Calu3 (cell line): ENCODE measurements at regions of chr4 and their contacts with region 1.

Region 1: DNA sequence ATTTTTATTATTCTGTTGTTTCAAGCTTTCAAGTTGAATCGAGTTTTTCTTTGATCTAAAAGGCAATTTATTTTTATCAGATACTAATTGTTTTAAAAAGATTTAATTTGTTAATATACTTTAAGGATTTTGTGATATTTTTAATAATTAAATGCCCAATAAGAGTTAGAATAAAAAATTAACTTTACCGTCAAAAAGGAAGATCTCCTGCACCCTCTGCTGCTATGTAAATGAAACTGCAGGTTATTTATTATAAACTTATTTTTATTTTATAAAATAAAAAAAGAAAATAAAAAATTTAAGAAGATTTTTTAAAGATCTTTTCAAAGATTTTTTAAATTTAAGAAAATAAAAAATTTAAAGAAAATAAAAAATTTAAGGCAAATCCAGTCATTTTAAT is 166.1 kb downstream of the CCSER1 start:
- DNase-seq: no peak
- H3K4me3 Mint-ChIP-seq: no peak overlapping the region
- H3K27ac Mint-ChIP-seq: no peak overlapping the region
- H3K4me1 Mint-ChIP-seq: no peaks in the 10 kb centered on the region
- H3K27me3 Mint-ChIP-seq: no peaks in the 10 kb centered on the region
- CTCF ChIP-seq: no peak

Region 2: GRCh38 chr4:89949782-89950387 is 343.4 kb before region 1 on chr4:
- CTCF ChIA-PET with region 1: no interaction called
- intact Hi-C with region 1: loop called (anchors 2 kb)
- DNase-seq: no peak
- H3K4me3 Mint-ChIP-seq: no peak overlapping the region
- H3K27ac Mint-ChIP-seq: no peak overlapping the region
- H3K4me1 Mint-ChIP-seq: no peaks in the 10 kb centered on the region
- H3K27me3 Mint-ChIP-seq: no peaks in the 10 kb centered on the region
- CTCF ChIP-seq: no peak

Region 3: GRCh38 chr4:90025248-90025647 is 268.1 kb before region 1 on chr4:
- CTCF ChIA-PET with region 1: no interaction called
- intact Hi-C with region 1: loop called (anchors 1 kb)
- DNase-seq: no peak
- H3K4me3 Mint-ChIP-seq: no peak overlapping the region
- H3K27ac Mint-ChIP-seq: no peak overlapping the region
- H3K4me1 Mint-ChIP-seq: no peaks in the 10 kb centered on the region
- H3K27me3 Mint-ChIP-seq: no peaks in the 10 kb centered on the region
- CTCF ChIP-seq: no peak

Region 4: GRCh38 chr4:90120037-90120436 is 173.3 kb before region 1 on chr4:
- CTCF ChIA-PET with region 1: no interaction called
- intact Hi-C with region 1: loop called (anchors 2 kb)
- DNase-seq: no peak
- H3K4me3 Mint-ChIP-seq: no peak overlapping the region
- H3K27ac Mint-ChIP-seq: no peak overlapping the region
- H3K4me1 Mint-ChIP-seq: no peaks in the 10 kb centered on the region
- H3K27me3 Mint-ChIP-seq: no peaks in the 10 kb centered on the region
- CTCF ChIP-seq: no peak

Region 5: DNA sequence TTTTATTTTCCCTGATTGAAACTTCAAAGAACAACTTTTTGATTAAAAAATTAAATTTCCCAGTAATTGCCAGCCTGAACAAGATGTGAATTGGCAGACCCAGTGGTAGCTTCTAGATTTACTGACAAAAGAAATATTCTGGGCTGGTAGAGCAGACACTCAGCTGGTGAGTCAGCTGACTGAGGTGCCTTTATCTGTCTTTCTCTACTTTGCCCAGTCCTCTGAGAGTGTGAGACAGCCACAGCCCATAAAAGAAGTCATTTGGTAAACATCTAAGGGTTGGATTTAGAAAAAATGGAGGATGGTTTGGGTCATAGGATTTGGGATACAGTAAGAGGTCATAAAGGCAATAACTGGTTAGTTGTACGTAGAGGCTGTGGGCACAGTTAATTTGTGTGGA is 111.7 kb before region 1 on chr4:
- CTCF ChIA-PET with region 1: no interaction called
- intact Hi-C with region 1: loop called (anchors 2 kb)
- DNase-seq: no peak
- H3K4me3 Mint-ChIP-seq: no peak overlapping the region
- H3K27ac Mint-ChIP-seq: peak overlapping the region; percentile 72
- H3K4me1 Mint-ChIP-seq: peaks cover 42% of the 10 kb centered on the region
- H3K27me3 Mint-ChIP-seq: no peaks in the 10 kb centered on the region
- CTCF ChIP-seq: no peak

Region 6: GRCh38 chr4:90209922-90210321 is 83.4 kb before region 1 on chr4:
- CTCF ChIA-PET with region 1: no interaction called
- intact Hi-C with region 1: no loop called
- DNase-seq: no peak
- H3K4me3 Mint-ChIP-seq: no peak overlapping the region
- H3K27ac Mint-ChIP-seq: peak overlapping the region; percentile 27
- H3K4me1 Mint-ChIP-seq: peaks cover 7% of the 10 kb centered on the region
- H3K27me3 Mint-ChIP-seq: no peaks in the 10 kb centered on the region
- CTCF ChIP-seq: no peak